CD4-positive, alpha-beta memory T cell (primary cell): ENCODE measurements at regions of chr1 and their contacts with region 1.

Region 1: GRCh38 chr1:156445789-156446263 is 54.7 kb downstream of the MEF2D start:
- DNase-seq: peak; percentile 71 to 80 (median 74)
- H3K4me3 ChIP-seq: no peak overlapping the region
- H3K4me3 Mint-ChIP-seq: peak overlapping the region in 2 of 8 donors; percentile 43 to 60
- H3K27ac ChIP-seq: no peak overlapping the region
- H3K27ac Mint-ChIP-seq: peak overlapping the region in 2 of 7 donors; percentile 28 to 63
- H3K4me1 ChIP-seq: peaks cover 6% of the 10 kb centered on the region
- H3K4me1 Mint-ChIP-seq: peaks cover 3 to 8% (median 7%) of the 10 kb centered on the region in 4 donors
- H3K27me3 ChIP-seq: peaks cover 23% of the 10 kb centered on the region
- H3K27me3 Mint-ChIP-seq: peaks cover 42 to 44% of the 10 kb centered on the region in 2 donors

Region 2: GRCh38 chr1:156146020-156146768 is 299.6 kb before region 1 on chr1:
- CTCF ChIA-PET with region 1: no interaction called
- POLR2A ChIA-PET with region 1: no interaction called
- intact Hi-C with region 1: loop called (anchors 5 kb)
- DNase-seq: peak; percentile 61 to 76 (median 73)
- H3K4me3 ChIP-seq: no peak overlapping the region
- H3K4me3 Mint-ChIP-seq: peak overlapping the region; percentile 60 to 87 (median 76)
- H3K27ac ChIP-seq: no peak overlapping the region
- H3K27ac Mint-ChIP-seq: peak overlapping the region in 6 of 7 donors; percentile 72 to 92 (median 80)
- H3K4me1 ChIP-seq: peaks cover 11% of the 10 kb centered on the region
- H3K4me1 Mint-ChIP-seq: peaks cover 8 to 22% (median 13%) of the 10 kb centered on the region in 4 donors
- H3K27me3 ChIP-seq: no peaks in the 10 kb centered on the region
- H3K27me3 Mint-ChIP-seq: peaks cover 0 to 3% of the 10 kb centered on the region in 2 donors

Region 3: DNA sequence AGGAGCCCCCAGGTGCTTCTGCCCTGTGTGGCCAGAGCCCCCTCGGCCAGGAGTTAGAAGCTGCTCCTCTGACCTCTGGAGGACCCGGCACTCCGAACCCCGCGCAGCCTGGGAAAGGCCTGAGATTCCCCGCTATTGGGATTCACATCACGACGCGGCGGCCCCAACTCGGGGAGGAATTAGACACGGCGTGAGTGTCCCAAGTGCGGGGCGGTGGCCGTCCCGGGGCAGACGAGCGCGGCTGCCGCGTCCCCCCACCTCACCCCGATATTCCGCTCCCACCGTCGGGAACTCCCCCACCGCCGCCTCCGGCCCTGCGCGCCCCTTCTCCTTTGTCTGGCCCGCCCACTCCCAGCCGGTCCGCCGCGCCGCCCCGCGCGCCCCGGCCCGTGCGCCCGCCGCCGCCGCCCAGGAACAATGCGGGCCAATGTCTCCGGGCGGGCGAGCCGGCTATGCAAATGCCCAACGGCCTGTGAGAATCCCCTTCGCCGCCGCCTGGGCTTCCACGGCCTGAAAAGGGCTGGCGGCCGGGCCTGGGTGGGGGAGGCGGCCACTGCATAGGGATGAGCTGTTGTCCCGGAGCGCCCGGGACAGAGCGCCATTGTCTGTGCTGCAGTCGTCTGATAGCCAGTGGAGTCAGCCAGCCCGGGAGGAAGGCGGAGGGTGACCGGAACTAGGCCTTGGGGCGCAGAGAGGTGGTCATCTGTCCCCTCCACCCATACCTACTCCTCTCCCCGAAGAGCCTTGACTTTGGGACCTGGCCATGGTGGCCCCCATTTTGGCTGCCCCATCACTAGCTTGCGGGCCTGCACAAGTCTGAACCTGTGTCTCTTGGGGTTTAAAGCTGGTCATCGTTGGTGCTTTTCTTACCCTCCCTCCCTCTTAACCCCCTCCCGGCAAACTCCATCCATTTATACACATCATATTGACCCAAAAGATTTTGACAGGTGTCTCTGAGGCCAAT is 57.4 kb before region 1 on chr1:
- CTCF ChIA-PET with region 1: interaction called, 303 read pairs
- POLR2A ChIA-PET with region 1: interaction called, 37 read pairs
- intact Hi-C with region 1: loop called (anchors 1 kb)
- DNase-seq: no peak
- H3K4me3 ChIP-seq: no peak overlapping the region
- H3K4me3 Mint-ChIP-seq: no peak overlapping the region
- H3K27ac ChIP-seq: no peak overlapping the region
- H3K27ac Mint-ChIP-seq: no peak overlapping the region
- H3K4me1 ChIP-seq: peaks cover 6% of the 10 kb centered on the region
- H3K4me1 Mint-ChIP-seq: peaks cover 4 to 14% (median 7%) of the 10 kb centered on the region in 4 donors
- H3K27me3 ChIP-seq: peaks cover 7% of the 10 kb centered on the region
- H3K27me3 Mint-ChIP-seq: peaks cover 21 to 35% of the 10 kb centered on the region in 2 donors

Region 4: DNA sequence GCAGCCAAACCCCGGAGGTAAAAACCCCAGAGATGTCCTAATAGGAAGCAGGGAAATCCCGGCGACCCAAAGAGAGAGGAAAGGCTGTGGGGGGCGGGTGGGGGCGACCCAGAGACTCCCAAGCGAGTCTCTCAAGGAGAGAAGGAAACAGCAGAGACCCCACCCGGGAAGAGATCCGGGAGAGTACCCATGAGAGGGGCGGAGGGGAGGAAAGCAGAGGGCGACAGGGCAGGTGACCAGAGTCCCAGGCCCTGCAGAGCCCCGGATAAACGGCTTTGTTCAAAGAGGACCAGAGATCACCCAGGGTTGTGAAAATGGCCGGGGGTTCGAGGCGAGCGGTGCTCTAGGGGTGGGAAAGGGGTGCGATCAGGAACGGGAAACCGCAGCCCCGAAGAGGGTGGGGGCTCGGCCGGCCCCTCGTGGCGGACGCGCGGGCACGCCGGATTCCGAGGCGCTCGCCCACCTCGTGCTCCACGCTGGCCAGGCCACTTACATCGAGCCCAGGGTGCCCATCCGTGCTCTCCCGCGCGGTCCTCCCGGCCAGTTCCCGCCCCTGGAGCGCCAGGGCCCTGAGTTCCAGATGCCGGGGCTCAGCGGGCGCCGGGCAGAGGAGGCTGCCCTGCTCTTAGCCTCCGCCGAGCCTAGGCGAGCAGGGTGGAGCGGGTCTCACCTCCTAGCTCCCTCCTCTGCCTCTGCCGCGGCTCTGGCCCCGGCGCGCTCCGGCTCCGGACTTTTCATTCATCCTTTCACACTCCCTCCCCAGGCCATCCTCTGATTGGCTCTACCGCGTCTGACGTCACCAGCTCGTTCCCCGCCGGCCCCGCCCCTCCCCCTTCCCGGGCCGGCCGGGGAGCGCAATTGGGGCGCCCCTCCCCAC is 24.5 kb before region 1 on chr1:
- CTCF ChIA-PET with region 1: interaction called, 18 read pairs
- POLR2A ChIA-PET with region 1: interaction called, 5 read pairs
- intact Hi-C with region 1: no loop called
- DNase-seq: peak; percentile 54 to 70 (median 63)
- H3K4me3 ChIP-seq: peak overlapping the region; percentile 23 to 71
- H3K4me3 Mint-ChIP-seq: peak overlapping the region; percentile 88 to 99 (median 90)
- H3K27ac ChIP-seq: no peak overlapping the region
- H3K27ac Mint-ChIP-seq: peak overlapping the region; percentile 17 to 83 (median 52)
- H3K4me1 ChIP-seq: peaks cover 33% of the 10 kb centered on the region
- H3K4me1 Mint-ChIP-seq: peaks cover 13 to 37% (median 23%) of the 10 kb centered on the region in 4 donors
- H3K27me3 ChIP-seq: peaks cover 47% of the 10 kb centered on the region
- H3K27me3 Mint-ChIP-seq: peaks cover 31 to 43% of the 10 kb centered on the region in 2 donors

Region 5: DNA sequence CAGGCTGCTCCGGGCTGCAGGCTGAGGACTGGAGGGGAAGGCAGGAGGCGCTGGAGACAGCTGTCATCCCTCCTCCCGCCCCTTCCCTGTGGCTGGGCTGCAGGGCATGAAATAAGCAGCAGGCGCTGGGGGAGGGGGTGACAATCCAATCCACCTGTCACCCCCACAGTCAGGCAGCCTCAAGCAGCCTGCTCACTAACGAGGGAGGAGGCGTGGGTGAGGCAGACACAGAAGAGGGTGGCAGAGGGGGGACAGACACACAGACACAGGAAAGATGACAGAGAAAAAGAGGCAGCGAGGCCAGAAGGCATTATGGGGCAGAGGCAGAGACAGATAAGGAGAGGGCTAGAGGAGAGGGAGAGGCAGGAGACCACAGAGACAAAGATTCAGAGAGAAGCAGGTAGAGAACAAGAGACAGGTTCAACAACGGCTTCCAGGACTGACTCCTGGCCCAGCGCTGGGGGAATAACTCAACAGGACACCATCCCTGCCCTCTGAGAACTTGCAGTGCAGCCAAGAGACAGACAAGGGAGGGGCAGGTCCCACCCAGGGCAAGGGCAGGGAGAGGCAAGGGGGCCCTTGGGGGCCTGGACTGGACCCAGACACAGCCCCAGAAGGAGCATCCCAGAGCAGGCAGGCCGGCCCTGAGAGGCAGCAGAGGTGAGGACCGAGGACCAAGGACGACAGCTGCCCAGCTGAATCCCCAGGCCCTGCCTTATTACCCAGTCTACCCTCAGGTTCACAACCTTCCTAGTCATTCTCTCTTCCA is 43.5 kb after region 1 on chr1:
- CTCF ChIA-PET with region 1: no interaction called
- POLR2A ChIA-PET with region 1: no interaction called
- intact Hi-C with region 1: no loop called
- DNase-seq: peak; percentile 29 to 77 (median 34)
- H3K4me3 ChIP-seq: peak overlapping the region; percentile 0 to 5
- H3K4me3 Mint-ChIP-seq: peak overlapping the region; percentile 60 to 95 (median 78)
- H3K27ac ChIP-seq: peak overlapping the region; percentile 51
- H3K27ac Mint-ChIP-seq: peak overlapping the region; percentile 75 to 98 (median 90)
- H3K4me1 ChIP-seq: peaks cover 98% of the 10 kb centered on the region
- H3K4me1 Mint-ChIP-seq: peaks cover 72 to 96% (median 83%) of the 10 kb centered on the region in 4 donors
- H3K27me3 ChIP-seq: no peaks in the 10 kb centered on the region
- H3K27me3 Mint-ChIP-seq: no peaks in the 10 kb centered on the region

Region 6: GRCh38 chr1:156601122-156601830 is 155.4 kb after region 1 on chr1 and contains the start of gene GPATCH4:
- CTCF ChIA-PET with region 1: interaction called, 11 read pairs
- POLR2A ChIA-PET with region 1: no interaction called
- intact Hi-C with region 1: no loop called
- DNase-seq: peak; percentile 75 to 82 (median 76)
- H3K4me3 ChIP-seq: peak within 1 kb of the TSS; percentile 82 to 83
- H3K4me3 Mint-ChIP-seq: peak within 1 kb of the TSS; percentile 90 to 100 (median 99)
- H3K27ac ChIP-seq: peak within 1 kb of the TSS; percentile 83
- H3K27ac Mint-ChIP-seq: peak within 1 kb of the TSS; percentile 83 to 100 (median 98)
- H3K4me1 ChIP-seq: peaks cover 30% of the 10 kb centered on the region
- H3K4me1 Mint-ChIP-seq: peaks cover 13 to 37% (median 26%) of the 10 kb centered on the region in 4 donors
- H3K27me3 ChIP-seq: no peaks in the 10 kb centered on the region
- H3K27me3 Mint-ChIP-seq: no peaks in the 10 kb centered on the region
- total RNA-seq, gene GPATCH4: 26.9 to 30.7 TPM